ENCODE measurements at regions of chr2 and their contacts with region 1.

Region 1: DNA sequence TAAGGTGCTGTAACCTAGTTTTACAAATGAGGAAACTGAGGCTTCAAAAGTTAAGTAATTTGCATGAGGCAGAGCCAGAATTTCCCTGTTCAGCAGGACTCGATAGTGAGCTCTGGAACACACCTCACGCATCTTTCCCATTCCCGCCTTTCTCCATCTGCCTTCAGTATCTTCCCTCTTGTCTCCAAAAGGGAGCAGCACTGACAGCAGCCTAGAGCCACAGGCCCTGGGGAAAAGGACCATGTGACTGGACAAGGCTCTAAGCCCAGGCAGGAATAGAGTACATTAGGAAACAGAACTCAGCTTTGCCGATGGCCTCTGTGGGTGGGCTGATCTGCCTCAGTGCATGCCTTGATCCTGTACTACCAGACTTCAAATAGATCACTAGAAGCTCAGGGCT is 21.5 kb downstream of the GPR155 start:
- DNase-seq: no peak
- ATAC-seq: peak; percentile 61
- H3K4me3 ChIP-seq: no peak overlapping the region
- H3K27ac ChIP-seq: no peak overlapping the region
- H3K4me1 ChIP-seq: no peaks in the 10 kb centered on the region
- H3K27me3 ChIP-seq: no peaks in the 10 kb centered on the region
- CTCF ChIP-seq: 0 out of 6 replicates have a peak, but pooled peaks of 1 of the 3 experiments have one; percentile 4
- POLR2A ChIP-seq: no peak
- RAD21 ChIP-seq: no peak

Region 2: GRCh38 chr2:174522553-174522952 is 57.2 kb after region 1 on chr2:
- CTCF ChIA-PET with region 1: interaction called, 10 read pairs
- POLR2A ChIA-PET with region 1: no interaction called
- RAD21 ChIA-PET with region 1: no interaction called
- intact Hi-C with region 1: loop called (anchors 2 kb)
- DNase-seq: no peak
- ATAC-seq: no peak
- H3K4me3 ChIP-seq: no peak overlapping the region
- H3K27ac ChIP-seq: no peak overlapping the region
- H3K4me1 ChIP-seq: no peaks in the 10 kb centered on the region
- H3K27me3 ChIP-seq: peaks cover 6% of the 10 kb centered on the region; the same call in 1 of the 2 replicates
- CTCF ChIP-seq: peak in 2 of 3 experiments; percentile 9 to 28; a peak in 2 of 6 replicates
- POLR2A ChIP-seq: no peak
- RAD21 ChIP-seq: peak; percentile 46

Region 3: GRCh38 chr2:174603280-174603679 is 138.0 kb after region 1 on chr2:
- CTCF ChIA-PET with region 1: interaction called, 10 read pairs
- POLR2A ChIA-PET with region 1: no interaction called
- RAD21 ChIA-PET with region 1: interaction called in 1 of 2 experiments, 3 read pairs
- intact Hi-C with region 1: loop called (anchors 2 kb)
- DNase-seq: peak; percentile 23
- ATAC-seq: peak; percentile 95
- H3K4me3 ChIP-seq: no peak overlapping the region
- H3K27ac ChIP-seq: no peak overlapping the region
- H3K4me1 ChIP-seq: no peaks in the 10 kb centered on the region
- H3K27me3 ChIP-seq: no peaks in the 10 kb centered on the region
- CTCF ChIP-seq: peak; percentile 31 to 54 (median 45); a peak in 5 of 6 replicates
- POLR2A ChIP-seq: no peak
- RAD21 ChIP-seq: peak; percentile 45

Region 4: DNA sequence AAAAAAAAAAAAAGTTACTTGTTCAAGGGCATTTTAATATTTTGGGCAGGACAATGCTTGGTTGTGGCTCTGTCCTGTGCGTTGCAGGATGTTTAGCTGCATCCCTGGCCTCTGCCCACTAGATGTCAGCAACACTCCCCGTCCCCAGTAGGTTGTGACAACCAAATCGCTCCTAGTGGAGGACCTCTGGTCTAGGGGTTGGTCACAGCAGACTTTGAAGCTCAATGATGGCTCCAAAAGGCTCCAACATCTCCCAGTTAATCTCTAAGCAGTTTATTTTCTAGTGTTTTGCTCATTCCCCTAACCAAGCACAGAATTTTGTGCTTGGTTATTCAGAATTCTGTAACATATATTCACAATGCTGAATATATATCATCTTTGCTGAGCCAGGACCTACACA is 231.9 kb after region 1 on chr2:
- CTCF ChIA-PET with region 1: interaction called, 26 read pairs
- POLR2A ChIA-PET with region 1: no interaction called
- RAD21 ChIA-PET with region 1: no interaction called
- intact Hi-C with region 1: no loop called
- DNase-seq: peak; percentile 59
- ATAC-seq: peak; percentile 100
- H3K4me3 ChIP-seq: no peak overlapping the region
- H3K27ac ChIP-seq: no peak overlapping the region
- H3K4me1 ChIP-seq: no peaks in the 10 kb centered on the region
- H3K27me3 ChIP-seq: peaks cover 3% of the 10 kb centered on the region; the same call in 1 of the 2 replicates
- CTCF ChIP-seq: peak; percentile 75 to 93 (median 84)
- POLR2A ChIP-seq: no peak
- RAD21 ChIP-seq: peak; percentile 70

Region 5: DNA sequence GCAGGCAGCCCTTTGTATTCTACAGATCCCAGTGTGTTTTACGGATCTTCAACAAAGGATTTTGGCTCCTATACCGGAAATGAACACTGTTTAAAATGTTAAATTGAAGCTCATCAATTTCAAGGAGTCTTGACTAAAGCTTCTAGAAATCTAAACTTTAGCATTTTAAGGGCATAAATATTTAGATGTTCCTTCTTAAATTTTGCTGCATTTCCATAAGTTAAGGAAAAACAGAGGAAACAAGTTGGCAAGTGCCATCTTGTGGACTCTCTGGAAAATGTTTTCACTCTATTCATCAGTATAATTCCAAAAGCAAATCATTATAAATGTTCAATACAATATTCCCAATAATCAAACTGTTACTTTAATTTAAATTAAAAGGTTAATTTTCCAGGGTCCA is 520.3 kb after region 1 on chr2:
- CTCF ChIA-PET with region 1: no interaction called
- POLR2A ChIA-PET with region 1: no interaction called
- RAD21 ChIA-PET with region 1: no interaction called
- intact Hi-C with region 1: loop called (anchors 10 kb)
- DNase-seq: no peak
- ATAC-seq: no peak
- H3K4me3 ChIP-seq: no peak overlapping the region
- H3K27ac ChIP-seq: no peak overlapping the region
- H3K4me1 ChIP-seq: no peaks in the 10 kb centered on the region; a peak in 2 of 4 replicates
- H3K27me3 ChIP-seq: no peaks in the 10 kb centered on the region
- CTCF ChIP-seq: peak; percentile 44 to 81 (median 64)
- POLR2A ChIP-seq: no peak
- RAD21 ChIP-seq: peak; percentile 77